ENCODE measurements at regions of chr17 and their contacts with region 1.

Region 1: GRCh38 chr17:45247429-45248131 is 14.3 kb downstream of the SPATA32 start:
- DNase-seq: peak; percentile 87
- ATAC-seq: peak; percentile 92
- H3K4me3 Mint-ChIP-seq: peak overlapping the region; percentile 90
- H3K27ac Mint-ChIP-seq: peak overlapping the region; percentile 92
- H3K4me1 Mint-ChIP-seq: peaks cover 34% of the 10 kb centered on the region
- H3K27me3 Mint-ChIP-seq: no peaks in the 10 kb centered on the region
- CTCF ChIP-seq: no peak

Region 2: GRCh38 chr17:45087504-45087975 is 160.0 kb before region 1 on chr17:
- CTCF ChIA-PET with region 1: no interaction called
- POLR2A ChIA-PET with region 1: no interaction called
- intact Hi-C with region 1: no loop called
- DNase-seq: no peak
- ATAC-seq: no peak
- H3K4me3 Mint-ChIP-seq: no peak overlapping the region
- H3K27ac Mint-ChIP-seq: no peak overlapping the region
- H3K4me1 Mint-ChIP-seq: no peaks in the 10 kb centered on the region
- H3K27me3 Mint-ChIP-seq: no peaks in the 10 kb centered on the region
- CTCF ChIP-seq: no peak

Region 3: GRCh38 chr17:45228763-45229539 is 18.6 kb before region 1 on chr17:
- CTCF ChIA-PET with region 1: interaction called, 3 read pairs
- POLR2A ChIA-PET with region 1: interaction called, 39 read pairs
- intact Hi-C with region 1: loop called (anchors 1 kb)
- DNase-seq: peak; percentile 84
- ATAC-seq: peak; percentile 45
- H3K4me3 Mint-ChIP-seq: peak overlapping the region; percentile 79
- H3K27ac Mint-ChIP-seq: peak overlapping the region; percentile 99
- H3K4me1 Mint-ChIP-seq: peaks cover 97% of the 10 kb centered on the region
- H3K27me3 Mint-ChIP-seq: no peaks in the 10 kb centered on the region
- CTCF ChIP-seq: no peak

Region 4: DNA sequence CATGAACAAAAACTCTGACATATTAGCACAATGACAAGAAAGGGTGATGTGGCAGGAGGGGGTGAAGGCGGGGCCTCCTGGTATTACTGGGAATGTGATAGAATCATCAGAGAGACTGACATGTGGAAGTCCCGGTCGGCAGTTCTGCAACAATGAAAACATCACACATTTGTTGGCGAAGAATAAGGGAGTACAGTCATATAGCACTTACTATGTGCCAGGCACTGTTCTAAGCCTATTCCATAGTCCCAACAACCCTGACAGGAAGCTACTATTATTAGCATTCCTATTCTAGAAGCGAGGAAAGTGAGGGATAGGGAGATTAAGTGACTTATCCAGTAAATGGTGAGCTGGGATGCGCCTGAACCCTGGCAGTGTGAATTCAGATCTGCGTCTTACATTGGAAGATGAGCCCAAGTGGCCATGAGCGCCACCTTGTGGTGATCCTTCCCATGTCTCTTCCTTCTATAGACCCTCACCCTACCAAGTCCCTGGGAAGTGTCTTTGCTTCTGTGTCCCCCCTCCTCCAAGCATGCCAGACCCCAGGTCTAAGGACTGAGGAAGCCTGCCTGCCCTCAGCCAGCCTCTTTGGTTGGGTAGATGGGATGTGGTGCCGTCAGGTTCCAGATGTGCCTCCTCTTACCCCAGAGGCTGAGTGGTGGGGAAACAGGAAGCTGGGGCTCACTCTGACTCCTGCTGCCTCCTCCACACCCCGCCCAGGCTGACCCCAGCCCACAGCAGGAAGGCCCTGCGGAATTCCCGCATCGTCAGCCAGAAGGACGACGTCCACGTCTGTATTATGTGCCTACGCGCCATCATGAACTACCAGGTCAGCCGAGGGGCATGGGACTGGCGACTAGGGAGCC is 11.9 kb before region 1 on chr17:
- CTCF ChIA-PET with region 1: interaction called, 7 read pairs
- POLR2A ChIA-PET with region 1: interaction called, 16 read pairs
- intact Hi-C with region 1: loop called (anchors 1 kb)
- DNase-seq: peak; percentile 64
- ATAC-seq: peak; percentile 67
- H3K4me3 Mint-ChIP-seq: no peak overlapping the region
- H3K27ac Mint-ChIP-seq: peak overlapping the region; percentile 15
- H3K4me1 Mint-ChIP-seq: peaks cover 50% of the 10 kb centered on the region
- H3K27me3 Mint-ChIP-seq: no peaks in the 10 kb centered on the region
- CTCF ChIP-seq: peak; percentile 70

Region 5: DNA sequence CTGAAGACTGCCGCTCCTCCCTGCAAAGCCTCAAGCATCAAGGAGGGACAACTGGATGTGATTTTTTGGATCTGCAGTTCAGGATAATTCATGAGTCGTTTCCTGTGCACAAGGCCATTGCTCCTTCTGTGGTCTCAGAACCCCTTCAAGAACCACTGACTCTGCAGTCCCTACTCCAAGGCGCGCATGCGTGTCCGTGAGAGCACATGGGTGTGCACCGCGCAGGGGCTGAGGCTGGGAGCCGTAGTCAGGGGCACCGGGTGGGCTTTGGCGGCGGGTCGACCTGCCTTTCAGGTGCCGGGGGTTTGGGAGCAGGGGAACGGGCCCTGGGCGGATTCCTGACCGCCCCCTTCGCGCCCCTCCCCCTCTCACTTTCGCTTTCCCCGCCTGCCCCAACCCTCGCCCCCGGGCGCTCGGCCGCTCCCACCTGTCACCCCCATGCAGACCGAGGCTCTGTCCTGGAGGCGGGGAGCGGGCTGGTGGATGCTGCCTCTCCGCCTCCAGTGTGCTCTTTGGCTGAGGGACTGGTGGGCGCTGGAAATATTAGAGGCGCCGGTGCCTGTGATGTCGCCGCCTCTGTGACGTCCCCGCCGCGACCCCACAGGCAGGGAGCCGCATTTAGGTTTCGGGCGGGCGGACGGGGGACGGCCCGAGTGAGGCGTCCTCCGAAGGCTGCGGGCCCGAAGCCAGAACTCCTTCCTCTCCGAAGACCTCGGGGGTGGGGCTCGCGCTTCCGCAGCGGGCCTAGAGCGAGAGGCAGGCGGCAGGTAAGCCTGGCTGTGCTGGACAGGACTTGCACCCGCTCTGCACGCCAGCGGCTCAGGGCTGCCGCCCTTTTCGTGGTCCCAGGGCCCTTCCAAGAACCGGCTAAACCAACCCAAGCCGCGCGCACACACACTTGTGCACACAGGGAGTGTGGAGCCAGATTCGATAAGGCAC is 14.3 kb after region 1 on chr17 and contains the start of gene SPATA32:
- CTCF ChIA-PET with region 1: no interaction called
- POLR2A ChIA-PET with region 1: interaction called, 6 read pairs
- intact Hi-C with region 1: loop called (anchors 1 kb)
- DNase-seq: peak; percentile 46
- ATAC-seq: peak; percentile 76
- H3K4me3 Mint-ChIP-seq: peak within 1 kb of the TSS; percentile 86
- H3K27ac Mint-ChIP-seq: peak within 1 kb of the TSS; percentile 77
- H3K4me1 Mint-ChIP-seq: peaks cover 17% of the 10 kb centered on the region
- H3K27me3 Mint-ChIP-seq: no peaks in the 10 kb centered on the region
- CTCF ChIP-seq: no peak
- total RNA-seq, gene SPATA32: 0.27 and 0.39 TPM in 2 replicates

Region 6: GRCh38 chr17:45364531-45365390 is 117.2 kb after region 1 on chr17:
- CTCF ChIA-PET with region 1: no interaction called
- POLR2A ChIA-PET with region 1: no interaction called
- intact Hi-C with region 1: no loop called
- DNase-seq: no peak
- ATAC-seq: no peak
- H3K4me3 Mint-ChIP-seq: no peak overlapping the region
- H3K27ac Mint-ChIP-seq: no peak overlapping the region
- H3K4me1 Mint-ChIP-seq: no peaks in the 10 kb centered on the region
- H3K27me3 Mint-ChIP-seq: peaks cover 26% of the 10 kb centered on the region
- CTCF ChIP-seq: no peak

Measured in activated B cell treated with CpG ODN at 0.5 μM for 24 hours (primary cell).